ENCODE measurements at regions of chr12 and their contacts with region 1.

Region 1: GRCh38 chr12:82685790-82686167 is 927 bp upstream of the TMTC2 start:
- DNase-seq: peak; percentile 97
- H3K4me3 Mint-ChIP-seq: peak overlapping the region; percentile 84
- H3K27ac Mint-ChIP-seq: peak overlapping the region; percentile 68
- H3K4me1 Mint-ChIP-seq: peaks cover 11% of the 10 kb centered on the region
- H3K27me3 Mint-ChIP-seq: peaks cover 6% of the 10 kb centered on the region

Region 2: GRCh38 chr12:82358200-82359114 is 327.3 kb before region 1 on chr12 and contains the starts of genes CCDC59 and METTL25:
- CTCF ChIA-PET with region 1: no interaction called
- intact Hi-C with region 1: loop called (anchors 1 kb)
- DNase-seq: peak; percentile 98
- H3K4me3 Mint-ChIP-seq: peak within 1 kb of the TSS; percentile 93
- H3K27ac Mint-ChIP-seq: peak within 1 kb of the TSS; percentile 96
- H3K4me1 Mint-ChIP-seq: peaks cover 42% of the 10 kb centered on the region
- H3K27me3 Mint-ChIP-seq: no peaks in the 10 kb centered on the region
- total RNA-seq, gene CCDC59: 87.1 to 93.3 TPM
- total RNA-seq, gene METTL25: 4.1 to 5.7 TPM

Region 3: GRCh38 chr12:82527165-82527780 is 158.5 kb before region 1 on chr12:
- CTCF ChIA-PET with region 1: interaction called, 3 read pairs
- intact Hi-C with region 1: loop called (anchors 1 kb)
- DNase-seq: peak; percentile 20
- H3K4me3 Mint-ChIP-seq: no peak overlapping the region
- H3K27ac Mint-ChIP-seq: no peak overlapping the region
- H3K4me1 Mint-ChIP-seq: no peaks in the 10 kb centered on the region
- H3K27me3 Mint-ChIP-seq: peaks cover 3% of the 10 kb centered on the region

Region 4: DNA sequence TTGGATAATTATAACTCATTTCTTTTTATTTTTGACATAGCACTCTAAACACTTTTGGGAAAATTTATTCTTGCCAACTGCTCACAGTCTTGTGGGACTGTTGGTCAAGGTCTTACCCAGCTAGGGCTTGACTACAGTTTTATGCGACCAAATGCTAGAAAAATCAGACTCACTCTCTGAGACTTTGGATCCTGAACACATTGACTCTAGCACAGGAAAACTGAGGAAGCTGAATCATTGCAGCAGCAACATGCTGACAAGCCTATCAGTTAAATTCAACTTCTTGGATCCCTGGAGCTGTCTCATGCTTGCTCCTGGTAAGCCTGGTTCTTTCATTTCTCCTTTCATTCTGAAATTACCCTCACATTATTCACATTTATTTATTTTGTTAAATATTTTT is 119.8 kb before region 1 on chr12:
- CTCF ChIA-PET with region 1: no interaction called
- intact Hi-C with region 1: no loop called
- DNase-seq: no peak
- H3K4me3 Mint-ChIP-seq: no peak overlapping the region
- H3K27ac Mint-ChIP-seq: no peak overlapping the region
- H3K4me1 Mint-ChIP-seq: no peaks in the 10 kb centered on the region
- H3K27me3 Mint-ChIP-seq: peaks cover 3% of the 10 kb centered on the region

Region 5: DNA sequence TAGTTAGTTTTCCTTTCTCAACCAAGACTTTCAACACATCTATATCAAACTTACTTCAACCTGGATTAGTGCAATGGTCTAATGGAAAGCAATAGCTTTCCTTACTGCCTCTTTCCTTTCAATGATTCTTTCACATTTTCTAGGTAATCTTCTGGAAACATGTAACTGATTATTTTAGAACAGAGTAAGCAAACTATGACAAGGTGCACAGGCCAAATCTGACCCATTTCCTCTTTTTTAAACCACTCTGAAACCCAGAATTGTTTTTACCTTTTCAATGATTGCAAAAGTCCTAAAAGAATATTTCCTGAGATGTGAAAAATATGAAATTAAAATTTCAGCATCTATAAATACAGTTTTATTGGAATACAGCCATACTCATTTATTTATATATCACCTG is 80.7 kb before region 1 on chr12:
- CTCF ChIA-PET with region 1: no interaction called
- intact Hi-C with region 1: no loop called
- DNase-seq: no peak
- H3K4me3 Mint-ChIP-seq: no peak overlapping the region
- H3K27ac Mint-ChIP-seq: no peak overlapping the region
- H3K4me1 Mint-ChIP-seq: no peaks in the 10 kb centered on the region
- H3K27me3 Mint-ChIP-seq: no peaks in the 10 kb centered on the region

Region 6: DNA sequence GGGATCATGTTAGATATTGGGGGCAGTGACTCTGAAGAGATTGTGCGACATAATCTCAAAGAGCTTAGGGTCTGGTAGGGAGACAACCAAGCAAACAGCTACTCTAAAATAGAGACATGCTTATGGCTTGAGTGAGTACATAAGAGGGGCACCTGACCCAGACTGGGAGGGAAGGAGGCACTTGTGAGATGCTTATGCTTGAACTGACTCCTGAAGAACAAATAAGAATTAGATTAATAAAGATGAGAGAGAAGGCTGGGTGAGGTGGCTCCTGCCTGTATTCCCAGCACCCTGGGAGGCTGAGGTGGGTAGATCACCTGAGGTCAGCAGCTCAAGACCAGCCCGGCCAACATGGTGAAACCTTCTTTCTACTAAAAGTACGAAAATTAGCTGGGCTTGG is 20.0 kb after region 1 on chr12:
- CTCF ChIA-PET with region 1: interaction called, 11 read pairs
- intact Hi-C with region 1: no loop called
- DNase-seq: no peak
- H3K4me3 Mint-ChIP-seq: no peak overlapping the region
- H3K27ac Mint-ChIP-seq: no peak overlapping the region
- H3K4me1 Mint-ChIP-seq: no peaks in the 10 kb centered on the region
- H3K27me3 Mint-ChIP-seq: no peaks in the 10 kb centered on the region

Region 7: DNA sequence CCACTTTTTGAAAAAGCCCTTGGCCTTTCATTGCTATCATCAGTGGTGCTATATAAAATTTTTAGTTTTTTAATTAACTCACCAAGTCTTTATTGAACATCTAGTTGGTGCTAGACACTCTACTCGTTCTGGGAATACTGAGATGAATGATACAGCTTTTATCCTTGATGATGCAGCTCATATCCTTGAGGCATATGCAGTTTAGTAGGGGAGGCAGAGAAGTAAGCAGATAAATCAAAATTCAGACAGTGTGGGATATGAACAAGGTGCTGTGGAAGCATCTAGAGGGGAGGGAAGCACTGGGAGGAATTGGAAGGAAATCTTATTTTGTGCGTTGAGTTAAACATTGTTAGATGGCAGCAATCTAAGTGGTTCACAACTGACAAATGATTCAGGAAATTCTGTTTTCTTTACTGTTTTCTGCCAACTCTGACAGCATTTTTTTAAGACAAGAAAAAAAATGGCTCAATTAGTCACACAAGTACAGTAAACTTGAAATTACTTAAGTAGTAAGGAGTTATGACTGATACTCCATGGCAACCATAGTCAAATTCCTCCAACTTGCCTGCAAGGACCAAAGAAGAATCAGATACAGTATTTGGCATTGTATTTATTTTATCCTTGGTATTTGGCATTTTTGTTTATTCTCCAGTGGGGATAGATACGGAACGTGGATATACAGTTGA is 120.2 kb after region 1 on chr12:
- CTCF ChIA-PET with region 1: interaction called, 3 read pairs
- intact Hi-C with region 1: loop called (anchors 5 kb)
- DNase-seq: no peak
- H3K4me3 Mint-ChIP-seq: no peak overlapping the region
- H3K27ac Mint-ChIP-seq: no peak overlapping the region
- H3K4me1 Mint-ChIP-seq: no peaks in the 10 kb centered on the region
- H3K27me3 Mint-ChIP-seq: no peaks in the 10 kb centered on the region

Region 8: DNA sequence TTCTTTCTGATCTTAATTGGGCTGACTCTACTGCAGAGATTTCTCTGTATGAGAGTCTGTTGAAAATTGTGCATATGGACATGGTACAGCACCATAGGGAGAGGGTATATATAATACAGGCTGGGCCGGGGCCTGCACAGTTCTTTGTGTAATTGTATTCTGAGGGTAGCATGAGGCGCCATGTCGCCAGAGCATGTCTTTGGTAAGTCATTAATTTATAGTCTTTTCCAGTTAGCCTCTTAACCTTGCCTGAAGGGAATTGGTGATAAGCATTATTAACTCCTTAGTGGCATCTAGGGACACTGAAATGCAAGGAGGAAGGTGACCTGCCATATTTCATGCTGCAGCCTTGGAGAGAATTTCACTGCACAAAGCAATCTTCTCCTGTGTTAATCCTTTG is 570.8 kb after region 1 on chr12:
- CTCF ChIA-PET with region 1: no interaction called
- intact Hi-C with region 1: loop called (anchors 5 kb)
- DNase-seq: no peak
- H3K4me3 Mint-ChIP-seq: no peak overlapping the region
- H3K27ac Mint-ChIP-seq: no peak overlapping the region
- H3K4me1 Mint-ChIP-seq: no peaks in the 10 kb centered on the region
- H3K27me3 Mint-ChIP-seq: no peaks in the 10 kb centered on the region

Region 9: GRCh38 chr12:83954939-83955601 is 1269.3 kb after region 1 on chr12:
- CTCF ChIA-PET with region 1: no interaction called
- intact Hi-C with region 1: loop called (anchors 5 kb)
- DNase-seq: peak; percentile 5
- H3K4me3 Mint-ChIP-seq: no peak overlapping the region
- H3K27ac Mint-ChIP-seq: no peak overlapping the region
- H3K4me1 Mint-ChIP-seq: no peaks in the 10 kb centered on the region
- H3K27me3 Mint-ChIP-seq: no peaks in the 10 kb centered on the region